Heart left ventricle (tissue), 16 donors: ENCODE measurements at regions of chr14 and their contacts with region 1.

Region 1: DNA sequence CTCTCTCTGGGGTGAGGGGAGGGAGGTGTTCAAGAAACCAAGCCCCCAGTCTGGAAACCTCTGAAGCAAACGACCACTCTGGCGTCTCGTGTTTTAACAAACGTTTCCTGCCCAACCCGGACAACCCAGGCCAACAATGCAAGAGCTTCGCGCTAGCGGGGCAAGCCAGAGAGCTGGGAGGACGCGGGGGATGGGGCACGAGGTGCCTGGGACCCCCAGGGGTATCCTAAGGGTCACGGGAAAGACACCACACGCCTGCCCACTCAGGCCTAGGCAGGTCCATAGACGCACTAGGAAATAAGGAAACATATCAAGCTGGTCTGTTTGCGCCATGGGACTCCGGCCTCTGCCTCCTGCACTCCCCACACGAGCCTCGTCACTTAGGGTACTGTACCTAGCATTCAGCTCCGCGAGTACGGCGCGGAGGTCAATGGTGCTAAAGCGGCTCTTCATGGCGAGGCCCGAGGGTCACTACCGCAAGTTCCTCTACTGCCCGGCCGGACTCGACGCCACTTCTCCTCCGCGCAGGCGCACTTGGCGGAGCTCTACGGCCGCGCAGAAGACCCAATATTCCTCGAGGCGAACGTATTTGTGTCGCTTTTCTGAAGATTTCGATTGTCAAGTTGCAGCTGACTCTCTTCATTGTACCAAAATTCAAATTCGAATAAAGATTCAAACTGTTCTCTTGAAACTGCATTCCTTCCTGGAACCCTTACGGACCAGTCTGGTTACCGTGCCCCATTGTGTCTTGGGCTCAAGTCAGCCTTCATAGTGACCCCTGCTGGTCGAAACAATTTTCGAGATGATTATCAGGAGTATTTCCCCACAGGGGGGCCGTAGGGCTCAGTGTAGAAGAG is at the start of gene NEMF:
- DNase-seq: peak; percentile 87 to 94 (median 91)
- ATAC-seq: peak; percentile 91 to 92 (median 92)
- H3K4me3 ChIP-seq: peak within 1 kb of the TSS; percentile 55 to 97 (median 79)
- H3K27ac ChIP-seq: peak within 1 kb of the TSS; percentile 9 to 98 (median 90)
- H3K4me1 ChIP-seq: peaks cover 0 to 46% (median 17%) of the 10 kb centered on the region in 12 donors
- H3K27me3 ChIP-seq: no peaks in the 10 kb centered on the region
- CTCF ChIP-seq: peak; percentile 64 to 96 (median 80)
- POLR2A ChIP-seq: peak in 1 of 2 donors; percentile 43
- total RNA-seq, gene NEMF: 26.7 to 69.7 (median 52.8) TPM

Region 2: DNA sequence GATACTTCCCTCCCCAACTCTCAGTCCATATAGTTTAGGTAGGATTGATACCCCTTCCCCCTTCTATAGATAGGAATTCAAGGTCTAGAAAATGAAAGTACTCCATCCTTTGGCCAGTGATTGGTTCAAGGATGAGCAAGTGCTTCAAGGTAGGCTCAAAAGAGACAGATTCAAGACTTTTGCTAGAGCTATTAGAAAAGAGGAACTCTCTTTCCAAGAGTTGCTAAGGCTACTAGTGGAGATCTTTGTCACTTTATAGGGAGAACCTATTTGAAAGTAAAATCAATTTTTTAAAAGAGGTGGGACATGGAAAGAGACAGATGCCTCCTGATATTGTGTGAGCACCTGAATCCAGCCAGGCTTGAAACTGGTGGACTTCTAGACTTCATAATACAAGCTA is 182.1 kb before region 1 on chr14:
- intact Hi-C with region 1: no loop called
- DNase-seq: no peak
- ATAC-seq: no peak
- H3K4me3 ChIP-seq: no peak overlapping the region
- H3K27ac ChIP-seq: no peak overlapping the region
- H3K4me1 ChIP-seq: no peaks in the 10 kb centered on the region
- H3K27me3 ChIP-seq: no peaks in the 10 kb centered on the region
- CTCF ChIP-seq: no peak
- POLR2A ChIP-seq: no peak

Region 3: DNA sequence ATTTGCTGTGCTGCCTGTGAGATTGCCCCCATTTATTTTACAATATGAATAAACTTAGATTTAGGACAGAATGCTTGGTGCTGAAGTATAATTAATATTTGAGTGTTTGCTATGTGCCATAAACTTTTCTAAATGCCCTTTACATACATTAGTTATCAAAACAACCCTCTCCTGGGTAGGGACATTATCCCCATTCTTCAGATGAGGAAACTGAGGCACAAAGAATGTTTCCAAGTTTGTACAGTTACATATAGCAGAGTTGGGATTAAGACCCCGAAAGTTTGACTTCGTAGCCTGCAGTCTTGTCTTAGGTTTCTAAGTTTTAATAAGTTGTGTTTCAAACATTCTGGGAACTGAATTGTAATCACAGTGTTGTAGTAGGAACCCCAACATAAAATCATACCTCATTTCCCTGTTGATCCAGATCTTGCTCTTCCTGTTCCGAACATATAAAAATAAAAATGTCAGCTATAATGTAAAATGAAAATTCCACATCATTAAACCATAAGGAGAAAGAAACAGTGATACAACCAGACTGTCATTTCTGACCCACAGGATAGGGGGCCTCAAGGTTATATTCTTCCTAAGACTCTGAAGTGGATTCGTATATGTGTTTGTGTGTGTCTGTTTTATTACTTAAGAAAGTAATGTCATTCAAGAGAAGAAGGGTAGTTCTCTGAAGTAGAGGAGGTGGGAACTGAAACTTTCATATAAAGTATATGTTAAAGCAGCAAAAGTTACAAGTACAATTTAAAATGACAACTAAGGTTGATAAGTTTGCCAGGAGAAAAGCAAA is 66.0 kb before region 1 on chr14:
- intact Hi-C with region 1: loop called in 1 of 10 experiments (anchors 10 kb)
- DNase-seq: no peak
- ATAC-seq: no peak
- H3K4me3 ChIP-seq: no peak overlapping the region
- H3K27ac ChIP-seq: no peak overlapping the region
- H3K4me1 ChIP-seq: no peaks in the 10 kb centered on the region
- H3K27me3 ChIP-seq: no peaks in the 10 kb centered on the region
- CTCF ChIP-seq: no peak
- POLR2A ChIP-seq: no peak

Region 4: DNA sequence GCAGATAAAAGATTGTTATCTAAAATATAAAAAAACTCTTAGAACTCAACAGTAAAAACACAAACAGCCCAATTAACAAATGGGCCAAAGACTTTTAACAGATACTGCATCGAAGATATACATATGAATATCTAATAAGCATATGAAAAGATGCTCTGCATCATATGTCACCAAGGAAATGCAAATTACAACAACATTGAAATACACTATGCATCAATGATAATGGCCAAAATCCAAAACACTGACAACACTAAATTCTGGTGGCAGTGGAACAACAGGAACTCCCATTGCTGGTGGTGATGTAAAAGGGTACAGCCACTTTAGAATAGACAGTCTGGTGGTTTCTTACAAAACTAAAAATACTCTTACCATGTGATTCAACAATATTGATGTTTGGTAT is 43.7 kb before region 1 on chr14:
- intact Hi-C with region 1: no loop called
- DNase-seq: no peak
- ATAC-seq: no peak
- H3K4me3 ChIP-seq: no peak overlapping the region
- H3K27ac ChIP-seq: no peak overlapping the region
- H3K4me1 ChIP-seq: no peaks in the 10 kb centered on the region
- H3K27me3 ChIP-seq: no peaks in the 10 kb centered on the region
- CTCF ChIP-seq: no peak
- POLR2A ChIP-seq: no peak

Region 5: GRCh38 chr14:49820176-49820575 is 32.4 kb before region 1 on chr14:
- intact Hi-C with region 1: no loop called
- DNase-seq: no peak
- ATAC-seq: no peak
- H3K4me3 ChIP-seq: no peak overlapping the region
- H3K27ac ChIP-seq: no peak overlapping the region
- H3K4me1 ChIP-seq: no peaks in the 10 kb centered on the region
- H3K27me3 ChIP-seq: no peaks in the 10 kb centered on the region
- CTCF ChIP-seq: no peak
- POLR2A ChIP-seq: no peak